PC-9 (cell line): ENCODE measurements at regions of chr5 and their contacts with region 1.

Region 1: GRCh38 chr5:131270809-131271208 is 7.0 kb downstream of the CDC42SE2 start:
- DNase-seq: peak; percentile 30 to 73
- H3K4me3 ChIP-seq: peak overlapping the region; percentile 1; the same call in 1 of the 2 replicates
- H3K27ac ChIP-seq: peak overlapping the region; percentile 37
- H3K4me1 ChIP-seq: peaks cover 21% of the 10 kb centered on the region
- H3K27me3 ChIP-seq: no peaks in the 10 kb centered on the region
- CTCF ChIP-seq: no peak

Region 2: GRCh38 chr5:130455175-130455574 is 815.6 kb before region 1 on chr5:
- CTCF ChIA-PET with region 1: no interaction called
- POLR2A ChIA-PET with region 1: interaction called, 44 read pairs
- intact Hi-C with region 1: no loop called
- DNase-seq: no peak
- H3K4me3 ChIP-seq: no peak overlapping the region
- H3K27ac ChIP-seq: no peak overlapping the region
- H3K4me1 ChIP-seq: no peaks in the 10 kb centered on the region
- H3K27me3 ChIP-seq: no peaks in the 10 kb centered on the region
- CTCF ChIP-seq: no peak

Region 3: DNA sequence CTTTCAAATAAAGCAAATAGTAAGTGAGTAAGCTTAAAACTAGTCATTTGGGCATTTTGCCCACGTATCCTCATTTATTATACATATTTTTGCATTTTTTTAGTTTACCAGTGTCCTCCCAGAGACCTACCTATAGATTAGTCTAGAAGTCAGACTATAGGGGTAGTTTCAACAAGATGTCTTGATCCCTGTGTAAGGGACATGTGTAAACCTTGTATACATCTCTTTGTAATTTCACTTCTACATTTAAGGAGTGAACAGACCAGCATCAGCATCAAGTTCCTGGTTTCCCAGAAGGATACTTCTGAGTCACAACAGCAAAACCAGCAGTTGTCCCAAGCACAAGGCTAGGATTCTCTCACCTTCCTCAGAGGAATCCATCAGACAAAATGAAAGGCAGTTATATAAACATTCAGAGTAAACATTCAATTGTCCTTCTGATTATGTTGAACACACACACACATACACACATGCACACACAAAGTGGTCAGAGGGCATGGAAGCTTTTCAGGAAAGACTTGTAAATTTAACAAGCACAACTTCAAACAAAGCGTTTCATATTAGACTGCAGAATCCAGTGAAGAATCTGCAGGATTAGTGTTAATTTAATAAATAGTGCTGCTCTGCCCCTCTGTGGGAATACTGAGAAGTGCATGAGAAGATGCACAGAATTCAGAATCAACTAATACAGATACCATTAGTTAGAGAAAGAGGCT is 161.1 kb before region 1 on chr5:
- CTCF ChIA-PET with region 1: no interaction called
- POLR2A ChIA-PET with region 1: no interaction called
- intact Hi-C with region 1: no loop called
- DNase-seq: peak in 1 of 2 experiments; percentile 11
- H3K4me3 ChIP-seq: no peak overlapping the region
- H3K27ac ChIP-seq: no peak overlapping the region
- H3K4me1 ChIP-seq: no peaks in the 10 kb centered on the region
- H3K27me3 ChIP-seq: no peaks in the 10 kb centered on the region
- CTCF ChIP-seq: peak; percentile 86